ENCODE measurements at regions of chr18 and their contacts with region 1.

Region 1: GRCh38 chr18:46677611-46678010 is 20.6 kb upstream of the LOXHD1 start:
- DNase-seq: peak in 1 of 2 donors; percentile 26
- ATAC-seq: peak in 5 of 8 donors; percentile 56 to 77 (median 59)
- H3K4me3 ChIP-seq: no peak overlapping the region
- H3K27ac ChIP-seq: no peak overlapping the region
- H3K4me1 ChIP-seq: peaks cover 0 to 10% (median 0%) of the 10 kb centered on the region in 9 donors
- H3K27me3 ChIP-seq: peaks cover 0 to 8% (median 0%) of the 10 kb centered on the region in 7 donors
- CTCF ChIP-seq: peak in 5 of 9 donors; percentile 24 to 51 (median 41)

Region 2: DNA sequence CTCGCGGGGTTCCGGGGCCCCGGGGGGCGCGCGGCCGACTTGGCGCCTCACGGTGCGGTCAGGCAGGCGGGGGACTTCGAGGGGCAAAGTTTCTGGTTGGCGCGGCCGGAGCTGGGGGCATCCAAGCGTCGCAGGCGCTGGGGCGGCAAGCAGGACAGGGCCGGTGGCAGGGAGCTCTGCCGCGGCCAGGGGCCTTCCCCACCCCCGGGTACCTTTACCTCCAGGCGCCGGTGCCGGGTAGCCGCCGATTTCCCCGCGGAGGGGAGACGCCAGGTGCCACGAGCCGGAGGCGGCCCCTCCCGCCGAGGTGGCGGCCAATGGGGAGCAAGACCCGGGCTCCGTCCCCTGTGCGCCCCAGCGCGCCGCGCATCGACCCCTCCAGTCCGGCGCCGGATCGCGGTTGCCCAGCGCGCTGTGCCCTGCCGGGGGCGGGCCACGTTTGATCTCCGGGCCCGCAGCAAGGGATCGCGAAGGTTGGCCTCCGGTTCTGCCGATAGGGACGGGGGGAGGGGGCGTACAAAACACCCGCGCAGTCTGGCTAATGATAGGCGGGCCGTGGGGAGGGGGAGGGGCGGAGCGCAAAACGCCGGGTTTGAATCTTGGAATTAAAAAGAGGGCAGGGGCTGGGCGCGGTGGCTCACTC is 79.1 kb after region 1 on chr18 and contains the start of gene ST8SIA5:
- intact Hi-C with region 1: loop called in 1 of 10 experiments (anchors 5 kb)
- DNase-seq: peak in 1 of 2 donors; percentile 31
- ATAC-seq: peak; percentile 28 to 69 (median 45)
- H3K4me3 ChIP-seq: peak within 1 kb of the TSS; percentile 28 to 56 (median 50)
- H3K27ac ChIP-seq: peak within 1 kb of the TSS in 6 of 10 donors; percentile 43 to 85 (median 68)
- H3K4me1 ChIP-seq: peaks cover 0 to 61% (median 25%) of the 10 kb centered on the region in 9 donors
- H3K27me3 ChIP-seq: peaks cover 0 to 70% (median 44%) of the 10 kb centered on the region in 7 donors
- CTCF ChIP-seq: no peak
- total RNA-seq, gene ST8SIA5: 1.4 to 16.8 (median 7.1) TPM

Region 3: GRCh38 chr18:46787674-46788073 is 110.1 kb after region 1 on chr18:
- intact Hi-C with region 1: no loop called
- DNase-seq: no peak
- ATAC-seq: no peak
- H3K4me3 ChIP-seq: no peak overlapping the region
- H3K27ac ChIP-seq: no peak overlapping the region
- H3K4me1 ChIP-seq: no peaks in the 10 kb centered on the region
- H3K27me3 ChIP-seq: no peaks in the 10 kb centered on the region
- CTCF ChIP-seq: no peak

Region 4: GRCh38 chr18:46809145-46809544 is 131.5 kb after region 1 on chr18:
- intact Hi-C with region 1: loop called in 1 of 10 experiments (anchors 10 kb)
- DNase-seq: no peak
- ATAC-seq: no peak
- H3K4me3 ChIP-seq: no peak overlapping the region
- H3K27ac ChIP-seq: no peak overlapping the region
- H3K4me1 ChIP-seq: no peaks in the 10 kb centered on the region
- H3K27me3 ChIP-seq: no peaks in the 10 kb centered on the region
- CTCF ChIP-seq: no peak

Region 5: GRCh38 chr18:46917108-46917802 is 239.6 kb after region 1 on chr18 and contains the starts of genes KATNAL2 and PIAS2:
- intact Hi-C with region 1: loop called in 1 of 10 experiments (anchors 10 kb)
- DNase-seq: peak; percentile 66 to 85
- ATAC-seq: peak; percentile 92 to 98 (median 95)
- H3K4me3 ChIP-seq: peak within 1 kb of the TSS; percentile 64 to 94 (median 78)
- H3K27ac ChIP-seq: peak within 1 kb of the TSS; percentile 54 to 94 (median 90)
- H3K4me1 ChIP-seq: peaks cover 2 to 44% (median 26%) of the 10 kb centered on the region in 9 donors
- H3K27me3 ChIP-seq: no peaks in the 10 kb centered on the region
- CTCF ChIP-seq: peak in 2 of 9 donors; percentile 14 to 33
- total RNA-seq, gene KATNAL2: 0.93 to 3.9 (median 2.2) TPM
- total RNA-seq, gene PIAS2: 25.5 to 39.2 (median 34.9) TPM